Activated naive CD4-positive, alpha-beta T cell treated with anti-CD3 and anti-CD28 coated beads for 36 hours (primary cell): ENCODE measurements at regions of chr5 and their contacts with region 1.

Region 1: DNA sequence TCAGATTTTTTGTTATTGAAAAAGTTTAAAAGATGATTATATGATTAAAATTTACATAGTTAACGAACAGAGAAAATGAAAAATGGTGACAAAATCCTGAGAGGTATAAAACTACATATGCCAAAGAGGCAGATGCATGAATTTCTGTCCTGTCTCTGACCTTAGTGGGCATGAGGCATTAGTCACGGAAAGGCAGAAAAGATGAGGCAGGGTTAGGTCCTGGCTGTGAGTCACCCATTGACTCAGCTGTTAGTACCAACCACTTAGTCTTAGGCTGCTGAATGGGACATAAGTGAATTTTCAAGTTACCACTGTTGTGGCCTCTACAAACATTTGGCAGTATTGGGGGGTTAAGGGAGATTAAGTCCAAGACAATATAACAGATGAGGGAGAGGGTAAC is 33.1 kb downstream of the RASA1 start:
- DNase-seq: peak; percentile 58
- H3K4me3 Mint-ChIP-seq: no peak overlapping the region
- H3K27ac Mint-ChIP-seq: no peak overlapping the region
- H3K4me1 Mint-ChIP-seq: peaks cover 67% of the 10 kb centered on the region
- H3K27me3 Mint-ChIP-seq: no peaks in the 10 kb centered on the region

Region 2: DNA sequence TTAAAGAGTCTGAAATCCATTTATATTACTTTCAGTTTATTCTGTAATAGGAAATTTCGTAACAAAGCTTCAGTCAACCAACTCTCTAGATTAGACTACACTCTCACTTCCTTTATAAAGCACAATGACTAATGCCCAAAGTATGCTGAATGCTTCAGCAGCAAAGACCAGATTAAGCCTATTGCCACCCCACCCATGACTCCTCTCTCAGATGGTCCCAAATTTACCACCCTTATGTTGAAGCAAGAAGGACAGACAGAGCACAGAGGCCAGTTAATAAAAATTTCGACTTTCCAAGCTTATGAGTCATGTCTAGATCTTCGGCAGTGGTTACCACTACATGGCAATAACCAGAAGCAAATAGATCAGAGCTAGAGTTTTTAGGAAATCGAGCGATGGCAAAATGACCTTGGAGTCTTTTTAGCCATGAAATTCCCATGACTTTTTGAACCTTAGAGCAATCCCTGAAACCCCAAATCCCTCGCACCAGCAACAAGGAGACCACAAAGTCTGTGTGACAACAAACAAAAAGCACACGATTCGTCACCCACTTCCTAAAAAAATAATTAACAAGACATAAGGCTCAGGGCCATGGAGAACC is 320.8 kb before region 1 on chr5:
- CTCF ChIA-PET with region 1: no interaction called
- intact Hi-C with region 1: no loop called
- DNase-seq: no peak
- H3K4me3 Mint-ChIP-seq: no peak overlapping the region
- H3K27ac Mint-ChIP-seq: no peak overlapping the region
- H3K4me1 Mint-ChIP-seq: no peaks in the 10 kb centered on the region
- H3K27me3 Mint-ChIP-seq: peaks cover 6% of the 10 kb centered on the region

Region 3: GRCh38 chr5:87282269-87282668 is 18.5 kb before region 1 on chr5:
- CTCF ChIA-PET with region 1: no interaction called
- intact Hi-C with region 1: loop called (anchors 2 kb)
- DNase-seq: no peak
- H3K4me3 Mint-ChIP-seq: peak overlapping the region; percentile 57
- H3K27ac Mint-ChIP-seq: peak overlapping the region; percentile 77
- H3K4me1 Mint-ChIP-seq: peaks cover 43% of the 10 kb centered on the region
- H3K27me3 Mint-ChIP-seq: no peaks in the 10 kb centered on the region

Region 4: GRCh38 chr5:87322377-87322776 is 21.6 kb after region 1 on chr5:
- CTCF ChIA-PET with region 1: no interaction called
- intact Hi-C with region 1: no loop called
- DNase-seq: no peak
- H3K4me3 Mint-ChIP-seq: no peak overlapping the region
- H3K27ac Mint-ChIP-seq: no peak overlapping the region
- H3K4me1 Mint-ChIP-seq: peaks cover 53% of the 10 kb centered on the region
- H3K27me3 Mint-ChIP-seq: no peaks in the 10 kb centered on the region

Region 5: DNA sequence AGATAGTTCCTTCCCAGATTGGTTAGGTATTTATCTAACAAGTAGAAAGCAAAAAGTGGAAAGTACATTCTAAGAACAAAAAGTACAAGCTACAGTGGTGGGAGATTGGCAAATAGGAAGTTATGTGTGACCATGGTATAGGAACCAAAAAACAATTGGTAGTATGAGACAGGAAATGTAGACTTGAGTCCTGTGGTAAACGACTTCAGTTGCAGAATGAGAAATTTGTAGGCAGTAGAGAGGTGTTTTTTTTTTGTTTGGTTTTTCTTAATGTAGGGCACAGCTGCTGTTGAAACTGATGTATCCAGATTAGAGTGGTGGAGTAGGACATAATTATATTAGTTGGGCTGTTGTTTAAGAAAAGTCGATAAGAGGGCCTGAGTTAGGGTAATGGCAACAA is 40.0 kb after region 1 on chr5:
- CTCF ChIA-PET with region 1: interaction called, 3 read pairs
- intact Hi-C with region 1: loop called (anchors 2 kb)
- DNase-seq: no peak
- H3K4me3 Mint-ChIP-seq: peak overlapping the region; percentile 33
- H3K27ac Mint-ChIP-seq: peak overlapping the region; percentile 77
- H3K4me1 Mint-ChIP-seq: peaks cover 20% of the 10 kb centered on the region
- H3K27me3 Mint-ChIP-seq: no peaks in the 10 kb centered on the region

Region 6: GRCh38 chr5:87412630-87413342 is 112.0 kb after region 1 on chr5 and contains the start of gene CCNH:
- CTCF ChIA-PET with region 1: no interaction called
- intact Hi-C with region 1: no loop called
- DNase-seq: peak; percentile 98
- H3K4me3 Mint-ChIP-seq: peak within 1 kb of the TSS; percentile 95
- H3K27ac Mint-ChIP-seq: peak within 1 kb of the TSS; percentile 95
- H3K4me1 Mint-ChIP-seq: peaks cover 34% of the 10 kb centered on the region
- H3K27me3 Mint-ChIP-seq: no peaks in the 10 kb centered on the region
- total RNA-seq, gene CCNH: 58.1 to 61.6 TPM